ENCODE measurements at regions of chr10 and their contacts with region 1.

Region 1: GRCh38 chr10:128125944-128126764 is at the start of gene MKI67:
- DNase-seq: peak; percentile 43
- ATAC-seq: peak; percentile 94
- H3K4me3 ChIP-seq: peak within 1 kb of the TSS; percentile 89 to 90
- H3K27ac ChIP-seq: peak within 1 kb of the TSS; percentile 97
- H3K4me1 ChIP-seq: peaks cover 28% of the 10 kb centered on the region
- H3K27me3 ChIP-seq: no peaks in the 10 kb centered on the region
- CTCF ChIP-seq: no peak
- total RNA-seq, gene MKI67: 151 TPM

Region 2: GRCh38 chr10:128025437-128025836 is 100.7 kb before region 1 on chr10:
- CTCF ChIA-PET with region 1: no interaction called
- POLR2A ChIA-PET with region 1: interaction called, 10 read pairs
- in situ Hi-C with region 1: no loop called
- intact Hi-C with region 1: no loop called
- DNase-seq: no peak
- ATAC-seq: no peak
- H3K4me3 ChIP-seq: no peak overlapping the region
- H3K27ac ChIP-seq: no peak overlapping the region
- H3K4me1 ChIP-seq: no peaks in the 10 kb centered on the region
- H3K27me3 ChIP-seq: peaks cover 4% of the 10 kb centered on the region; the same call in 1 of the 2 replicates
- CTCF ChIP-seq: no peak

Region 3: DNA sequence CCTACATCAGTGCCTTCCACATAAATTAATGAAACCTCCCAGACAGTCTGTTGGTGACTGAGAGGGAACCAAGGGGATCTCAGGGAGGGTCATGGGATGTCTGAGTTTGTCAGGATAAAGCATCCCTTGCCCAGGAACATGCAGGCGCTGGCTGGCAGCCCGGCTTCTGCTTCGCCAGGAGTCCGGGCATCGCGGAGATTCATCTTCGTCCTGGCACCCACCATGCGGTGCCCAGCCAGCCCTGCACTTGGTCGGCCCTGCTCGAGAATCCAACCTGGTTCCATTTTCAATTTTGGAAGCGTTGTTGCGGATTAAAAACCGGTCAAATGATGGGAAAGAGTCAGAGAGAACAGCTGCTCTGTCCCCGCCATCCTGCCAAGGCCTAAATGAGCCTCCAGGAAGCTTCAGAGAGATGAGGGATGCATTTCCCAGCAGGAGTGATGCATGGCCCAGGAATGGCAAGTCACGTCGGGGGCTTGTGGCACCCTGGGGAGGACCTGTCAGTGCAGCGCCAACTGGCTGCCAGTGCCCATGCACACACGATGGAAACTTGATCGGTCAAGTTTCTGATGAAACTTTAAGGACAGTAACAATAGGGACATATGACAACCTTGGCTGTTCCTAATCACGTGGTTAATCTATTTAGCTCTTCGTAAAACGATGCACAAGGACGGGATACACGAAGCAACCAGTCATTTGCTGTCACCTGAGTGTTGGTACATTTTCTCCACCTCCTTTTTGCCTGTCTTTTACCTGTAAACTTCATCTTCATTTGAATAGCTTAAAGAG is 260.9 kb after region 1 on chr10:
- CTCF ChIA-PET with region 1: no interaction called
- POLR2A ChIA-PET with region 1: no interaction called
- in situ Hi-C with region 1: no loop called
- intact Hi-C with region 1: no loop called
- DNase-seq: no peak
- ATAC-seq: no peak
- H3K4me3 ChIP-seq: no peak overlapping the region
- H3K27ac ChIP-seq: no peak overlapping the region
- H3K4me1 ChIP-seq: no peaks in the 10 kb centered on the region
- H3K27me3 ChIP-seq: peaks cover 18% of the 10 kb centered on the region
- CTCF ChIP-seq: no peak